Posterior cingulate gyrus (tissue), 11 donors: ENCODE measurements at regions of chr10 and their contacts with region 1.

Region 1: DNA sequence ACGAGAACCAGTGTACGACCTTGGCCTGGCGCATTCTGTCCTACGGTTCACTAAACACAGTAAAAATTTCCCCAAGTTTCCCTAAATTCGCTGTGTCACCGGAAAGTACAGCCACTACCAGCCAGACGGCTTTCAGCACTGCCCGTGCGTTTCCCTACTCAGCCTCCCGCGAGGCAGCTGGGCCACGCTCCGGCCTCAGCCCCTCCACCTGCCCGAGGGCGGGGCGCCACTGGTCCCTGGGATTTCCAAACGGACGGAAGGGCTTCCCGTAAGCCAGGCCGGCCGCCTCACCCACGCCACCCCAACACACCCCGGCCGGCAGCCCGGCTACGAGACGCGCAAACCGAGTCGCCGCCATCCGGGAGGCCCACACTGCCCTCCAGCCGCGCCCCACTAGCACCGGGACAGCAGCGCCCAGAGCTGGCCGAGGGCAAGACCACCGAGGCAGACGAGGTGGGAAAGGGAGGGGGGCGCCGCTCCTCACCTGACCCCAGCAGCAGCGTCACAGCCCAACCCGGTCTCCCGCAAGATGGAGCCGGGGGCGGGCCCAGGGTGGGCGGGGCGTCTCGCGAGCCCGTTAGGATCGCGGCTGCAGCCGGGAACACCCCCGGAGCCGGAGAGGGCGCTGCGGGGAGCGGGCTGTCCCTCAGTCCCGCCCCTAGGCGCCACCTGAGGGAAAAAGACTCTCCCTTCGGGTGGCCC is at the start of gene ANXA7:
- DNase-seq: peak; percentile 86 to 98 (median 94)

Region 2: DNA sequence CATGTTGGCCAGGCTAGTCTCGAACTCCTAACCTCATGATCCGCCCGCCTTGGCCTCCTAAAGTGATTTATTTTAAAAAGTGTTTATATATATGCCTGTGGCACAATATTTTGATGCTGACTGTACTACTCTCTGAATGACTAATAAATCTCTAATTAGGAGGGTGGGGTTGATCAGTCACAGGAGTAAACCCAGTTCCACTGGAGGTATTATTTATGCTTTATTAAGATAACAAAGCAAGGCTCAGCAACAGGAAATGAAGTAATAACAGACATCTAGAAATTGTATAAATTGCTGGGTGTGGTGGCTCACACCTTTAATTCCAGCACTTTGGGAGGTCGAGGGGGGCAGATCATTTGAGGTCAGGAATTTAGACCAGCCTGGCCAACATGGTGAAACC is 747.8 kb before region 1 on chr10:
- intact Hi-C with region 1: no loop called
- DNase-seq: no peak

Region 3: GRCh38 chr10:73252445-73253224 is 161.0 kb before region 1 on chr10 and contains the start of gene MRPS16:
- intact Hi-C with region 1: loop called (anchors 10 kb)
- DNase-seq: peak; percentile 89 to 99 (median 94)